CD4-positive, alpha-beta memory T cell (primary cell): ENCODE measurements at regions of chr4 and their contacts with region 1.

Region 1: GRCh38 chr4:48141048-48141447 is 7.0 kb upstream of the TXK start:
- DNase-seq: peak in 4 of 5 donors; percentile 52 to 60 (median 54)
- H3K4me3 ChIP-seq: no peak overlapping the region
- H3K4me3 Mint-ChIP-seq: no peak overlapping the region
- H3K27ac ChIP-seq: no peak overlapping the region
- H3K27ac Mint-ChIP-seq: no peak overlapping the region
- H3K4me1 ChIP-seq: peaks cover 46% of the 10 kb centered on the region
- H3K4me1 Mint-ChIP-seq: peaks cover 42 to 52% (median 46%) of the 10 kb centered on the region in 4 donors
- H3K27me3 ChIP-seq: no peaks in the 10 kb centered on the region
- H3K27me3 Mint-ChIP-seq: no peaks in the 10 kb centered on the region

Region 2: GRCh38 chr4:47926639-47927258 is 214.3 kb before region 1 on chr4:
- CTCF ChIA-PET with region 1: no interaction called
- POLR2A ChIA-PET with region 1: no interaction called
- intact Hi-C with region 1: loop called (anchors 1 kb)
- DNase-seq: peak in 4 of 5 donors; percentile 45 to 49 (median 47)
- H3K4me3 ChIP-seq: no peak overlapping the region
- H3K4me3 Mint-ChIP-seq: peak overlapping the region in 6 of 8 donors; percentile 15 to 69 (median 47)
- H3K27ac ChIP-seq: no peak overlapping the region
- H3K27ac Mint-ChIP-seq: no peak overlapping the region
- H3K4me1 ChIP-seq: peaks cover 7% of the 10 kb centered on the region
- H3K4me1 Mint-ChIP-seq: peaks cover 11 to 13% (median 12%) of the 10 kb centered on the region in 4 donors
- H3K27me3 ChIP-seq: no peaks in the 10 kb centered on the region
- H3K27me3 Mint-ChIP-seq: peaks cover 9 to 15% of the 10 kb centered on the region in 2 donors

Region 3: DNA sequence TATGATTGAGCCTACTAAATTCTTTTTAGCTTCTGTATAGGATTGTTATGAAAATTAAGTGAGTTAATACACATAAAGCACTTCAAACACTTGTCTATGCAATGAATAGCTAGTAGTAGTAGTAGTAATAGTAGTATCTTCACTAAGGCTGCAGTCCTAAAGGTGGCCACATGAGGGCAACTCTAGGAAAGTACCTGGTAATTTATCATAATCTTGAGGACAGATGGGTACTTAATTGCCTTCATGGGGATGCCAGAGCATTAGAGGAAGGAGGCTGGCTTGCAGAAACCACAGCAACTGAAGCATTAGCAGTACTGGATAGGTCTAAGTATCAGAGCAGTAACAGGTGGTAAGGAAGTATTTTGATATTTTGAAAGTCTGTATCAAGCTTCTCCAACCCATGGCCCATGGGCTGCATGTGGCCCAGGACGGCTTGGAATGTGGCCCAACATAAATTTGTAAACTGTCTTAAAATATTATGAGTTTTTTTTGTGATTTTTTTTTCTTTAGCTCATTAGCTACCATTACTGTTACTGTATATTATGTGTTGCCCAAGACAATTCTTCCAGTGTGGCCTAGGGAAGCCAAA is 107.1 kb before region 1 on chr4:
- CTCF ChIA-PET with region 1: interaction called, 38 read pairs
- POLR2A ChIA-PET with region 1: no interaction called
- intact Hi-C with region 1: loop called (anchors 1 kb)
- DNase-seq: peak; percentile 49 to 67 (median 58)
- H3K4me3 ChIP-seq: no peak overlapping the region
- H3K4me3 Mint-ChIP-seq: no peak overlapping the region
- H3K27ac ChIP-seq: no peak overlapping the region
- H3K27ac Mint-ChIP-seq: no peak overlapping the region
- H3K4me1 ChIP-seq: no peaks in the 10 kb centered on the region
- H3K4me1 Mint-ChIP-seq: peaks cover 2 to 12% (median 3%) of the 10 kb centered on the region in 4 donors
- H3K27me3 ChIP-seq: no peaks in the 10 kb centered on the region
- H3K27me3 Mint-ChIP-seq: no peaks in the 10 kb centered on the region

Region 4: DNA sequence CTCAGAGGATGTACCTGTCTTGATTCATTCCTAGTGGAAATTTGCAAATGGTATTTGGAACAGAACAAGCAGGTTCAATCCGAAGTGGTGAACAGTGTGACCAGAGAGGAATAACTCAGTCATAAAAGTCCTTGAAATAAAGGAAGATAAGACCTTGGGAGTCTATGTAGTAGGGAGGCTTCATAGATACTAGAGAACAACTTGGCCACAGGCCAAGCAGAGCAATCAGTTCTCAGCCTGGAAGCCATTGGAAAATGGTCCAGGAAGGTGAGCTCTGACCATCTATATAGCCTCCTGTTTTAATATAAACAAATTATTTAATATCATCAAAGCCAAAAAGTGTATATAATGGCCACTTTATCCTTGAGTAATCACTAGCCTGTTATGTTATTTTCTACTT is 18.3 kb before region 1 on chr4:
- CTCF ChIA-PET with region 1: interaction called, 313 read pairs
- POLR2A ChIA-PET with region 1: interaction called, 145 read pairs
- intact Hi-C with region 1: loop called (anchors 1 kb)
- DNase-seq: no peak
- H3K4me3 ChIP-seq: no peak overlapping the region
- H3K4me3 Mint-ChIP-seq: no peak overlapping the region
- H3K27ac ChIP-seq: no peak overlapping the region
- H3K27ac Mint-ChIP-seq: no peak overlapping the region
- H3K4me1 ChIP-seq: peaks cover 90% of the 10 kb centered on the region
- H3K4me1 Mint-ChIP-seq: peaks cover 56 to 70% (median 66%) of the 10 kb centered on the region in 4 donors
- H3K27me3 ChIP-seq: no peaks in the 10 kb centered on the region
- H3K27me3 Mint-ChIP-seq: no peaks in the 10 kb centered on the region

Region 5: DNA sequence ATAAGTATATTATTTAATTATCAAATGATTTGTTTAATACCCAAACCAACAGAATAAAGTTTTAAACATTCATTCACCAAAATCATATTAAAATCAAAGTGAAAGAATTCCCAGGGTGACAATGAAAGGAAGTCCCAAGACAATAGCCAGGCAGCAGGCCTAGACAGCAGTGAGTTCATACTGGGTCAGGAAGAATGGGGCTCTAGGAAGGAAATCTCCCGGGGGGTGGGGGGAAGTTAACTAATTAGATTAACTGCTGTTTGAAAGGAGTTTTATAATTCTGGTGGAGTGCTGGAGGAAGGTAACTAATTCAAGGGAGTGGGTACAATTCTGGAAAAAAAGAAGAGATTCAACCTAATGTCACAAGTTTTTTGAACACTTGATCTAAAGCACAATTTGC is 453.1 kb after region 1 on chr4:
- CTCF ChIA-PET with region 1: no interaction called
- POLR2A ChIA-PET with region 1: no interaction called
- intact Hi-C with region 1: no loop called
- DNase-seq: no peak
- H3K4me3 ChIP-seq: no peak overlapping the region
- H3K4me3 Mint-ChIP-seq: no peak overlapping the region
- H3K27ac ChIP-seq: no peak overlapping the region
- H3K27ac Mint-ChIP-seq: peak overlapping the region in 4 of 7 donors; percentile 49 to 80 (median 67)
- H3K4me1 ChIP-seq: no peaks in the 10 kb centered on the region
- H3K4me1 Mint-ChIP-seq: peaks cover 4 to 9% (median 6%) of the 10 kb centered on the region in 4 donors
- H3K27me3 ChIP-seq: no peaks in the 10 kb centered on the region
- H3K27me3 Mint-ChIP-seq: no peaks in the 10 kb centered on the region